OCI-LY7 (cell line): ENCODE measurements at regions of chr7 and their contacts with region 1.

Region 1: DNA sequence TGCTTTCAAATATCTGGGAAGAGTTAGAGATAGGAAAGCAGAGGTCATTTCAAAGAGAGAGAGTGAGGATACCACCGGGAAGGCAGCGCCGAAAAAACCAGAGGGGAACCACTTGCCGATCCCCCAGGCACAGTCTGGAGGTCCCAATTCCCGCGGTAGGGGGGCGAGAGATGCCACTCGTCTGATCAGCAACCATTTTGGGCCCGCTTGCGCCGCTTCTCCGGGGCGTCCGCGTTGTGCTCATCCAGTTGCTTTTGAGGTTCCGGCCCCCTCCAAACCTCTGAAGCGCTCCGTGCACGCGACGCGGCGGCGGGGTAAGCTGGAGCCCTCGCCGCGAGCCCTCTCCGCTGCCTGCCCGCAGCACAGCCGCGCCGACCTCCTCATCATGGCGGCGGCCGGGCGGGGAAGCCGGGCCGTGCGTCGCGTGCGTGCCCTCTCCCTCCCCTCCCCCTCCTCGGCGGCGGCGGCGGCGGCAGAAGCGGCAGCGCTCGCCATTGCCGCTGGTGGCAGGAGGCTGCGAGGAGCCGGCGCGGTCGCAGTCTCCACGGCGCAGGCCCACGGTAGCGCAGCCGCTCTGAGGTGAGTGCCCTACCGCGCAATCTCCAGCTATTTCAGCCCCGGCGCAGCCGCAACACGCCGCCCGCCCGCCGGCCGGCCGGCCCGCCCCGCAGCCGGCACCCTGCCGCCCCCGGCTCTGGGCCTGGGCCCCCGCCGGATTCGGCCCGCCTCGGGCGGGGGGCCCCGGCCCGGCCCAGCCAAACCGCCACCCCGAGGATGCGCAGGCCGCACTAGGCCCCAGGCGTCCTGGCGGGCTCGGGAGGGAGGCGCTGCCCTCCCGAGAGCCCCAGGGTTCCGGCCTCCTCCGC is at the start of gene NRF1:
- DNase-seq: peak; percentile 91
- H3K4me3 ChIP-seq: peak within 1 kb of the TSS; percentile 80
- H3K27ac ChIP-seq: peak within 1 kb of the TSS; percentile 64
- H3K4me1 ChIP-seq: peaks cover 40% of the 10 kb centered on the region
- CTCF ChIP-seq: no peak
- total RNA-seq, gene NRF1: 21.4 and 26.5 TPM in 2 replicates

Region 2: GRCh38 chr7:129150199-129150996 is 461.1 kb before region 1 on chr7:
- CTCF ChIA-PET with region 1: interaction called, 10 read pairs
- POLR2A ChIA-PET with region 1: no interaction called
- intact Hi-C with region 1: no loop called
- DNase-seq: no peak
- H3K4me3 ChIP-seq: no peak overlapping the region
- H3K27ac ChIP-seq: no peak overlapping the region
- H3K4me1 ChIP-seq: peaks cover 26% of the 10 kb centered on the region
- CTCF ChIP-seq: no peak

Region 3: DNA sequence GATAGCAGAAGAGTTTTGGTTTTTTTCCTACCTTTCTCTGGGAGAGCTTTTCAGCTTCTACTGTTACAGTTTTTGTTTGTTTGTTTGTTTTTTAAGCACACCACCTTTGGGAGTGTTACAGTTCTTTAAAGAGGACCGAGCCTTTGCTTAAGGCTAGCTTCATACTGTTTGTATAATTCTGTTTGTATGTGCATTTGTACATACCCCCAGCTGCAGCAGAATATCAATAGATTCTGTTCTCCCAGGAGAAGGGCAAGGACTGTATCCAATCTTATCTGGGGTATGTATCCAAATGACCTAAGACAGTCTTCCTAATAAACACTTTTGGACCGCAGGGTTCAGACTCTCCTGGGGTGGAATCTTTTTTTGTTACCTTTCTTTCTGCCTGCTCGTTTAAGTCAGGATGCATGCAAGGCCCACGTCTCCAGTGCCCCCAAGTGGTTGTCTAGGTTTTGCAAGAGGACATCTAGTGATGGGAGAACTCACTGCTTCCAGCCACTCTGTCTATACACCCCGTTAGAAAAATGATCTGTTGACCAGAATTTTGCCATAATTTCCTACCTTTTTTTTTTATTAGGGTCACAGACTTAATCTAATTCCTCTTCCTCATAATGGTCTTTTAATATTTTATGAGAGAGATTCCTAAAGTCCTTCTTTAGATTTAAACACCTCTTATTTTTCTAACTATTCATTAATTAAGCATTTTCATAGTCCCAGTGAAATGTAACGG is 24.0 kb after region 1 on chr7:
- CTCF ChIA-PET with region 1: interaction called, 3 read pairs
- POLR2A ChIA-PET with region 1: interaction called, 4 read pairs
- intact Hi-C with region 1: loop called (anchors 1 kb)
- DNase-seq: peak; percentile 73
- H3K4me3 ChIP-seq: no peak overlapping the region
- H3K27ac ChIP-seq: no peak overlapping the region
- H3K4me1 ChIP-seq: peaks cover 5% of the 10 kb centered on the region
- CTCF ChIP-seq: peak; percentile 96

Region 4: GRCh38 chr7:129825496-129826267 is 214.2 kb after region 1 on chr7:
- CTCF ChIA-PET with region 1: no interaction called
- POLR2A ChIA-PET with region 1: no interaction called
- intact Hi-C with region 1: loop called (anchors 1 kb)
- DNase-seq: peak; percentile 78
- H3K4me3 ChIP-seq: peak overlapping the region; percentile 74
- H3K27ac ChIP-seq: no peak overlapping the region
- H3K4me1 ChIP-seq: peaks cover 4% of the 10 kb centered on the region
- CTCF ChIP-seq: peak; percentile 64

Region 5: GRCh38 chr7:129952653-129953560 is 341.4 kb after region 1 on chr7 and contains the start of gene UBE2H:
- CTCF ChIA-PET with region 1: no interaction called
- POLR2A ChIA-PET with region 1: no interaction called
- intact Hi-C with region 1: loop called (anchors 2 kb)
- DNase-seq: peak; percentile 91
- H3K4me3 ChIP-seq: peak within 1 kb of the TSS; percentile 81
- H3K27ac ChIP-seq: peak within 1 kb of the TSS; percentile 82
- H3K4me1 ChIP-seq: peaks cover 26% of the 10 kb centered on the region
- CTCF ChIP-seq: no peak
- total RNA-seq, gene UBE2H: 12.7 and 15.0 TPM in 2 replicates